Motor neuron (in vitro differentiated cells): ENCODE measurements at regions of chr3 and their contacts with region 1.

Region 1: GRCh38 chr3:13479581-13480339 is at the start of gene HDAC11:
- ATAC-seq: peak; percentile 88 to 97 (median 90)
- H3K4me3 ChIP-seq: peak within 1 kb of the TSS; percentile 46 to 89 (median 53)
- H3K27ac ChIP-seq: peak within 1 kb of the TSS; percentile 57 to 76
- H3K4me1 ChIP-seq: peaks cover 25 to 32% of the 10 kb centered on the region in 2 donors
- total RNA-seq, gene HDAC11: 2.7 to 23.8 (median 11.0) TPM

Region 2: GRCh38 chr3:13135251-13135810 is 344.4 kb before region 1 on chr3:
- in situ Hi-C with region 1: no loop called
- ATAC-seq: peak in 6 of 8 experiments; percentile 7 to 75 (median 34)
- H3K4me3 ChIP-seq: no peak overlapping the region
- H3K27ac ChIP-seq: no peak overlapping the region
- H3K4me1 ChIP-seq: peaks cover 17 to 29% of the 10 kb centered on the region in 2 donors

Region 3: DNA sequence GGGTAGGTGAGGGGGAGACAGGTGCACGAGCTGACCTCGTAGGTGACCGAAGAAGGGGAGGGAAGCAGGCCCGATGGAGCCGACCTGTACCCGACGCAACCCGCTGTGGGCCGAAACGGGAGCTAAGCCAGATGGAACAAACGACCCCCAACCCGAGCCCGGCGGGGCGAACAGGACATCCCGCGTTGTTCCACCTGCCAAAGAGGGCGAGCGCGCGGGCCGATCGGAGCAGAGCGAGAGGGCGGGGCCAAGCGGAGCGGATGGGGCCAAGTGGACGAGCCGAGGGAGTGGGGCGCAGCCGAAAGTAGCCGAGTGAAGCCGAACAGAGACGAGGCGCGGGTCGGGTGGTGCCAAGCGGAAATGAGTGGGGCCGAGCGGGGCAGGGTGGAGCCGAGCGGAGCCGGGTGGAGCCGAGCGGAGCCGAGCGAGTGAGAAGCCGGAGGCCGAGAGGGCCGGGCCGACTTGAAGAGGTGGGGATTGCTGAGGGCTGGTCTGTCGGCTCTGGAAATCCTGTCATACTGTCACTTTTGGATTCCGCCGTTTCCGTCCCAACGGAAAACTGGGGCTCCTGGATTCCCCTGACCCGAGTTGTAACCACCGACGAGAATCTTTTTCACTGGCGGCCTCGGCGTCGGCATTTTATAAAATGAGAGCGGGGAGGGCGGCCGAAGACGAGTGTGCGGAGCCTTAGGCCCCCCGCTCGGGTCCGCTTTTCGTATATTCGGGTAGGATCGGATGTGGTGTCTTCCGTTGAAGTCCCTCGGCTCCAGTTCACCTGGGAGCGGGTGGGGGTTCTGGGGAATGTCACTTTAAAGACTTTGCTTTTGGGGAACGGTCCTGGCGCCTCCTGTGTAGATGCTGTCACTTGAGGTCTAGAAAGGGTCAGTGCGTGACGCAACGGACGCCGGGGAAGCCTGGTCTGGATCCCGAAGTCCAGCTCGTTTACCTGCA is 415.7 kb after region 1 on chr3:
- in situ Hi-C with region 1: loop called in 4 of 9 experiments (anchors 25 kb)
- ATAC-seq: peak; percentile 95 to 99 (median 98)
- H3K4me3 ChIP-seq: peak overlapping the region; percentile 36 to 52 (median 45)
- H3K27ac ChIP-seq: no peak overlapping the region
- H3K4me1 ChIP-seq: peaks cover 4 to 13% of the 10 kb centered on the region in 2 donors

Region 4: DNA sequence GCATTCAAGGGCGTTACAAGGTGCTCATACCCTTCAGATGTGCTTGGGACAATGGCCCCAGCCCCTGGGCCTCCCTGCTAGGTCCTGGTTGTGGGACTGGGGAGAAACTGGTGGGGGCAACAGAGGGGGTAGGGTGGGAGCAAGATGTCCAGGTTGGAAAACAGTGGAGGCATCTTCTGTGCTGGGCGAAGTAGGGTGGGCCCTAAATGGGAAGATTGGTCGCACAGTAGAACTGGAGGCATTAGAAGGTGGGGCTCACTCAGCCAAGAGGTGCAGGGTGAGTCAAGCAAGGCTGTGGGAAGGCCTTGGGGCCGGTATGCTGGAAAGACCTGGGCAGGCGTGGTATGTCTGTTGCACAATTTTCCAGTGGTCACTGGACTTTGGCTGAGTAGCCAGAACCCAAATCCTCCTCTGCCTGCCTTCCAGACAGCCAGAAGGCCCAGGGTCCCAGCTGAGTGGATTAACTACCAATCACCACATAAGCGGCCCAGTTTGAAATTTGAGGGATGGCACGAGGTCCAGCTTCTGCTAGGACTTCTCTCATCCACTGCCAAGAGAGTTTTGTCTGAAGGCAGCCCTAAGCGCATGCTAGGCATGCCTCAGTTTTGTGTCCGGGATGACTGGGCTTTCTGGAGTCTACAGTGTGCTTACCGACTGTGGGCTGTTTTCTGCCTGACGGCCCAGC is 773.4 kb after region 1 on chr3:
- in situ Hi-C with region 1: no loop called
- ATAC-seq: peak in 3 of 8 experiments; percentile 27 to 84 (median 83)
- H3K4me3 ChIP-seq: no peak overlapping the region
- H3K27ac ChIP-seq: no peak overlapping the region
- H3K4me1 ChIP-seq: peaks cover 14% of the 10 kb centered on the region in 2 donors